Activated naive CD4-positive, alpha-beta T cell treated with anti-CD3 and anti-CD28 coated beads for 36 hours (primary cell): ENCODE measurements at regions of chr15 and their contacts with region 1.

Region 1: DNA sequence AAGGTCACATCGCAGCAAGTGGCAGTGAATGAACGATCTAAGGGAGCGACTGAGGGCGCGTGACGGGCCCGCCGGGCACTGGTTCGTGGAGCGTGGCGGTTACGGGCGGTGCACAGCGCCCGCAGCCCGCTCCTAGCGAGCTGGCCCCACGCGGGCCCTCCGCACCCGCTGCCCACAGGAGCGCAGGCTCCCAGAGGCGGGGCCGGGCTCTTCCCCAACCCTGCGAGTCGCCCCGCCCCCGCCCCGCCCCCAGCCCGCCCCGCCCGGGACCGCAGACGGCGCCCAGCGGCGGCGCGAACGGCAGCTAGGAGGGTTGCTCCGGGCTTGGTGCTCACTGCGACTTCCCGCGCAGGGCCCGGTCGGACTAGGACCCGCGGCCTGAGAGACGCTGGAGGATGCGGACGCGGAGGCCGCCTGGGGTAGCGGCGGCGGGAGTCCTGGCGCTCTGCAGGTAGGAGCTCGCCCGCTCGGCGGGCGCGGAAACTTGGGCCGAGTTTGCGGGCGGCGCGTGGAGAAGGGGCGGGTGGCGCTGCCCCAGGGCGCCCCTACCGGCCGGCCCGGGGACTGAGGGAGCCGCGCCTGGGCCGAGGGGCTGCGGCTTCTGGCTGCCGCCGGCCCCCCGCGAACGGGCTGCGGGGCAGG is at the start of gene C15orf39:
- DNase-seq: peak; percentile 68
- H3K4me3 Mint-ChIP-seq: peak within 1 kb of the TSS; percentile 87
- H3K27ac Mint-ChIP-seq: peak within 1 kb of the TSS; percentile 83
- H3K4me1 Mint-ChIP-seq: peaks cover 41% of the 10 kb centered on the region
- H3K27me3 Mint-ChIP-seq: no peaks in the 10 kb centered on the region
- total RNA-seq, gene C15orf39: 7.4 to 8.7 TPM

Region 2: GRCh38 chr15:73972984-73973682 is 1228.6 kb before region 1 on chr15:
- CTCF ChIA-PET with region 1: no interaction called
- intact Hi-C with region 1: no loop called
- DNase-seq: peak; percentile 92
- H3K4me3 Mint-ChIP-seq: peak overlapping the region; percentile 15
- H3K27ac Mint-ChIP-seq: no peak overlapping the region
- H3K4me1 Mint-ChIP-seq: peaks cover 31% of the 10 kb centered on the region
- H3K27me3 Mint-ChIP-seq: no peaks in the 10 kb centered on the region

Region 3: DNA sequence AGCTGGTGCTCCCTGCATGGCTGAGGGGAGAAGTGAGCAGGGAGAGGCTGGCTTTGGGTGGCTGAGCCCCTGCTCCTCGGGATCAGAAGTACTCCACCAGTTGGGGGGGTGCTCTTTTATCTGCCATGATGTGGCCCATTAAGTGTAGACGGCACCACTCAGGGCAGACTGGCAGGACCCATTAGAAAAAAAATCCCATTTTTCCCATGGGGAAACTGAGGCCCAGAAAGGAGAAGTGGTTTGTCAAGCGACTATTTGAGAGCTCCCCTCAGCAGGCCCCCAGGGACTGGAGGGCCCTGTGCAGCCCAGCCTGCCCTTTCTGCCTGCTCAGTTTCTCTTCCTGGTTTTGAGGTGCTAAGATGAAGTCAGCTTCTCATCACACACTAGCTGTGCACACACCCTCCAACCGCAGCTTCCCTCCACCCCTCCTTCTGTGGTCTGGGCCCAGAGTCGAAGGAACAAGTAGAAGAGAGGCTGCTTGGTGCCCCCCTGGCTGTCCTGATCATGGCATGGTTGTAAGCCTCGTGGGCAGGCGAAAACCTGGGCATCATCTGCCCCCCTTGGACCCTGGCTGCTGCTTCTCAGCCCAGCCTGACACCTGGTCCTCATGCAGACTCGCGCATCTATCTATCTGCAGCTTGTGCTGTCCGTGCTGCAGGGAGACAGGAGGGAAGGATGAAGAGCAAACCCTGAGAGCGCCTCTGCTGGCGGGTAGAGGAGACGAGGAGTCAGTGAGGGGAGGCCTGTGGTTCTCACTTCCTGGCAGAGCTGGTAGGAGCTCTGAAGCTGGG is 414.3 kb before region 1 on chr15:
- CTCF ChIA-PET with region 1: no interaction called
- intact Hi-C with region 1: loop called (anchors 5 kb)
- DNase-seq: peak; percentile 98
- H3K4me3 Mint-ChIP-seq: peak overlapping the region; percentile 93
- H3K27ac Mint-ChIP-seq: peak overlapping the region; percentile 99
- H3K4me1 Mint-ChIP-seq: peaks cover 55% of the 10 kb centered on the region
- H3K27me3 Mint-ChIP-seq: no peaks in the 10 kb centered on the region

Region 4: GRCh38 chr15:74798388-74799267 is 403.1 kb before region 1 on chr15:
- CTCF ChIA-PET with region 1: no interaction called
- intact Hi-C with region 1: no loop called
- DNase-seq: no peak
- H3K4me3 Mint-ChIP-seq: no peak overlapping the region
- H3K27ac Mint-ChIP-seq: peak overlapping the region; percentile 95
- H3K4me1 Mint-ChIP-seq: peaks cover 60% of the 10 kb centered on the region
- H3K27me3 Mint-ChIP-seq: no peaks in the 10 kb centered on the region

Region 5: DNA sequence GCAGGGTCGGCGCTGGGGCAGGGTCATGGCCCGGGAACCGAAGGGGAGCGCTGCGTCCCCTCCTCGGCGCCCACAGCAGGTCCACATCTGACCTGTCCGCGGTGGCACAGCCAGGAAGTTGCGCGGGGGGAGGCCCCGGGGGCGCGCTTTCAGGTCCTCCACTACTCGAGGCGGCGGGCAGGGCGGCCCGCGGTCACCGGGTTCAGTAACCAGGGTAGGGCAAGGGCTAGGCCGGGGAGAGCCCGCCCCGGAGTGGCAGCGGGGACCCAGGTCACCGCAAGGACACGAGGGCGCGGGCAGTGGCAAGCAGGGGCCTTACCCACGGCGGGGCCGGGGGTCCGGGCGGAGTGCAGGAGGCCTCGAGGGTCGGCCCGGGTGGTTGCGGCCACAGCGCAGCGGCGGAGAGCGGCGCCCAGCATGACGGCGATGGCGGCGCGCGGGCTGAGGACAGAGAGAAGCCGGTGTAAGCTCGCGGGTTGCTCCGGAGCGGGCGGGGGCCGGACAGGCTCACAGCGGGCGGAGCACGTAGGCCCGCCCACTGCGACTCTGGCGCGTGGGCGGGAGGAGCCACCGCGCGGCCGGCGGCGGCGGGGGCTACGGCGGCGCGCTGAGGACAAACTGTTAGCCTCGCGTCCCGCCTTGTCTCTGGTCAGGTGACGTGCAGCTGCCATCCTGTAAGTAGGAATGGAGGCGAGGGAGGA is 264.0 kb before region 1 on chr15 and contains the start of gene COX5A:
- CTCF ChIA-PET with region 1: no interaction called
- intact Hi-C with region 1: loop called (anchors 5 kb)
- DNase-seq: peak; percentile 95
- H3K4me3 Mint-ChIP-seq: peak within 1 kb of the TSS; percentile 90
- H3K27ac Mint-ChIP-seq: peak within 1 kb of the TSS; percentile 89
- H3K4me1 Mint-ChIP-seq: peaks cover 33% of the 10 kb centered on the region
- H3K27me3 Mint-ChIP-seq: no peaks in the 10 kb centered on the region
- total RNA-seq, gene COX5A: 346 to 348 TPM

Region 6: GRCh38 chr15:75029378-75030022 is 172.2 kb before region 1 on chr15:
- CTCF ChIA-PET with region 1: interaction called, 38 read pairs
- intact Hi-C with region 1: loop called (anchors 1 kb)
- DNase-seq: peak; percentile 94
- H3K4me3 Mint-ChIP-seq: no peak overlapping the region
- H3K27ac Mint-ChIP-seq: no peak overlapping the region
- H3K4me1 Mint-ChIP-seq: peaks cover 23% of the 10 kb centered on the region
- H3K27me3 Mint-ChIP-seq: no peaks in the 10 kb centered on the region

Region 7: GRCh38 chr15:75335705-75336355 is 134.1 kb after region 1 on chr15 and contains the start of gene COMMD4:
- CTCF ChIA-PET with region 1: no interaction called
- intact Hi-C with region 1: loop called (anchors 10 kb)
- DNase-seq: peak; percentile 96
- H3K4me3 Mint-ChIP-seq: peak within 1 kb of the TSS; percentile 97
- H3K27ac Mint-ChIP-seq: peak within 1 kb of the TSS; percentile 81
- H3K4me1 Mint-ChIP-seq: peaks cover 21% of the 10 kb centered on the region
- H3K27me3 Mint-ChIP-seq: no peaks in the 10 kb centered on the region
- total RNA-seq, gene COMMD4: 65.8 to 70.4 TPM

Region 8: GRCh38 chr15:75367913-75368688 is 166.4 kb after region 1 on chr15 and contains the start of gene MAN2C1:
- CTCF ChIA-PET with region 1: no interaction called
- intact Hi-C with region 1: no loop called
- DNase-seq: peak; percentile 96
- H3K4me3 Mint-ChIP-seq: peak within 1 kb of the TSS; percentile 90
- H3K27ac Mint-ChIP-seq: peak within 1 kb of the TSS; percentile 94
- H3K4me1 Mint-ChIP-seq: peaks cover 27% of the 10 kb centered on the region
- H3K27me3 Mint-ChIP-seq: no peaks in the 10 kb centered on the region
- total RNA-seq, gene MAN2C1: 228 to 247 TPM